Heart left ventricle (tissue), 16 donors: ENCODE measurements at regions of chr6 and their contacts with region 1.

Region 1: GRCh38 chr6:106556368-106556960 is 72.8 kb downstream of the RTN4IP1 start:
- DNase-seq: no peak
- ATAC-seq: no peak
- H3K4me3 ChIP-seq: no peak overlapping the region
- H3K27ac ChIP-seq: no peak overlapping the region
- H3K4me1 ChIP-seq: peaks cover 0 to 10% (median 0%) of the 10 kb centered on the region in 12 donors
- H3K27me3 ChIP-seq: no peaks in the 10 kb centered on the region
- CTCF ChIP-seq: peak in 10 of 12 donors; percentile 5 to 50 (median 34)
- POLR2A ChIP-seq: no peak

Region 2: GRCh38 chr6:105424175-105424783 is 1132.2 kb before region 1 on chr6:
- intact Hi-C with region 1: loop called in 1 of 10 experiments (anchors 10 kb)
- DNase-seq: peak in 1 of 5 donors; percentile 17
- ATAC-seq: peak in 3 of 4 donors; percentile 56 to 69 (median 56)
- H3K4me3 ChIP-seq: no peak overlapping the region
- H3K27ac ChIP-seq: no peak overlapping the region
- H3K4me1 ChIP-seq: peaks cover 0 to 9% (median 0%) of the 10 kb centered on the region in 12 donors
- H3K27me3 ChIP-seq: no peaks in the 10 kb centered on the region
- CTCF ChIP-seq: peak; percentile 50 to 75 (median 60)
- POLR2A ChIP-seq: no peak

Region 3: DNA sequence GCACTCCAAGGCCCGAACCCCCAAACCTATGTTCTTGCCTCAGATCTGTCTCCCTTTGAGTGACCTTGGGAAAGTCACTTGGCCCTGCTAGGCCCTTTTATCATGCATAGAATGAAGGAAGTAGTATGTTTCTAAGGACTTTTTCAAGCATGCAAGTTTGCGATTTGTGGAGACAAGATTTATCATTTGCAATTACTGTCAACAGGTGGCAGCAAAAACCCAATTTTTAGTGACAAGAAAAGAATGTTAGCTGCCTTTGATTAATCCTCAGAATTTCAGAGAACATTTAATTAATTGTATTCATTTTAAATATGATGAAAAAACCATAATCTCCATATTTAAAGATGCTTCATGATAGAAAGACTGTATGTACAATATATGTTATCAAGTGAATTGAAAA is 1125.2 kb before region 1 on chr6:
- intact Hi-C with region 1: loop called in 2 of 10 experiments (anchors 5 to 10 kb)
- DNase-seq: no peak
- ATAC-seq: no peak
- H3K4me3 ChIP-seq: no peak overlapping the region
- H3K27ac ChIP-seq: no peak overlapping the region
- H3K4me1 ChIP-seq: peaks cover 0 to 9% (median 0%) of the 10 kb centered on the region in 12 donors
- H3K27me3 ChIP-seq: peaks cover 0 to 6% (median 0%) of the 10 kb centered on the region in 9 donors
- CTCF ChIP-seq: peak; percentile 37 to 71 (median 56)
- POLR2A ChIP-seq: no peak

Region 4: DNA sequence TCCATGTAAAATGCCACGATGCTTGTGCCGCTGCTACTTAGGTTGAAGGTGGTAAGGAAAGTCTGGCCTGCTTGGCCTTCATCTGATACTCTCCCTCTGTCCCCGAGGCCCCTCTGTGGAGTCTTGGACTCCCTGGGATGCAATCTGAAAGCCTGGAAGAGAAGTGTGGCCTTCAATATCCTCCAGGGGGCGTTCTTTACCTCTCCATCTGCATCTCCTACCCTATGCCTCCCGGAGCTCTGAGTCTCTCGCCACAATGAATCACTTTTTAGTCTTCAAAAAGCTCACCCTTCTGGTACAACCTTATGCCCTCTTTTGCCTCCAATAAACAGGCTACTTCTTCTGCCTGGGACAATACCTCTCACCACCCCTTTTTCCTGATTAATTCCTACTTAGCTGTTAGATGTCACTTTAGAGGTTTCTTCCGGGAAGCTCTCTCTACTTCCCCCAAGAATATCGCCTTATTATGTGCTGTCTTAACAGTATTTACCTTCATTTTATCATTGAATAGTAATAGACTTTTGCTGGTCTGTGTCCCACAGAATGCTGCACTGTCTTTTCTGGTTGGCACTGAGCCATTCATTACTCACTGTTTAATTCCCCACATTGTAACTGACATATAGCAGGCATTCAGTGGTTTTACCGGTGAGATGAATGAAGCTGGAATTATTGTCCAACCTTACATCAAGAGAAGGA is 217.0 kb before region 1 on chr6:
- intact Hi-C with region 1: loop called in 1 of 10 experiments (anchors 10 kb)
- DNase-seq: peak in 3 of 5 donors; percentile 9 to 30 (median 24)
- ATAC-seq: peak in 3 of 4 donors; percentile 71 to 88 (median 82)
- H3K4me3 ChIP-seq: peak overlapping the region in 1 of 12 donors; percentile 7
- H3K27ac ChIP-seq: no peak overlapping the region
- H3K4me1 ChIP-seq: peaks cover 0 to 5% (median 0%) of the 10 kb centered on the region in 12 donors
- H3K27me3 ChIP-seq: peaks cover 0 to 5% (median 0%) of the 10 kb centered on the region in 9 donors
- CTCF ChIP-seq: peak; percentile 54 to 74 (median 65)
- POLR2A ChIP-seq: no peak

Region 5: GRCh38 chr6:106512048-106512967 is 44.2 kb before region 1 on chr6:
- intact Hi-C with region 1: loop called in 1 of 10 experiments (anchors 5 kb)
- DNase-seq: peak; percentile 63 to 89 (median 72)
- ATAC-seq: peak; percentile 44 to 87 (median 86)
- H3K4me3 ChIP-seq: peak overlapping the region; percentile 54 to 92 (median 76)
- H3K27ac ChIP-seq: peak overlapping the region; percentile 26 to 96 (median 76)
- H3K4me1 ChIP-seq: peaks cover 0 to 73% (median 25%) of the 10 kb centered on the region in 12 donors
- H3K27me3 ChIP-seq: peaks cover 0 to 51% (median 28%) of the 10 kb centered on the region in 9 donors
- CTCF ChIP-seq: peak in 6 of 12 donors; percentile 7 to 45 (median 30)
- POLR2A ChIP-seq: no peak

Region 6: GRCh38 chr6:106586815-106587415 is 30.5 kb after region 1 on chr6:
- intact Hi-C with region 1: no loop called
- DNase-seq: no peak
- ATAC-seq: no peak
- H3K4me3 ChIP-seq: no peak overlapping the region
- H3K27ac ChIP-seq: no peak overlapping the region
- H3K4me1 ChIP-seq: peaks cover 0 to 8% (median 0%) of the 10 kb centered on the region in 12 donors
- H3K27me3 ChIP-seq: no peaks in the 10 kb centered on the region
- CTCF ChIP-seq: no peak
- POLR2A ChIP-seq: no peak

Region 7: DNA sequence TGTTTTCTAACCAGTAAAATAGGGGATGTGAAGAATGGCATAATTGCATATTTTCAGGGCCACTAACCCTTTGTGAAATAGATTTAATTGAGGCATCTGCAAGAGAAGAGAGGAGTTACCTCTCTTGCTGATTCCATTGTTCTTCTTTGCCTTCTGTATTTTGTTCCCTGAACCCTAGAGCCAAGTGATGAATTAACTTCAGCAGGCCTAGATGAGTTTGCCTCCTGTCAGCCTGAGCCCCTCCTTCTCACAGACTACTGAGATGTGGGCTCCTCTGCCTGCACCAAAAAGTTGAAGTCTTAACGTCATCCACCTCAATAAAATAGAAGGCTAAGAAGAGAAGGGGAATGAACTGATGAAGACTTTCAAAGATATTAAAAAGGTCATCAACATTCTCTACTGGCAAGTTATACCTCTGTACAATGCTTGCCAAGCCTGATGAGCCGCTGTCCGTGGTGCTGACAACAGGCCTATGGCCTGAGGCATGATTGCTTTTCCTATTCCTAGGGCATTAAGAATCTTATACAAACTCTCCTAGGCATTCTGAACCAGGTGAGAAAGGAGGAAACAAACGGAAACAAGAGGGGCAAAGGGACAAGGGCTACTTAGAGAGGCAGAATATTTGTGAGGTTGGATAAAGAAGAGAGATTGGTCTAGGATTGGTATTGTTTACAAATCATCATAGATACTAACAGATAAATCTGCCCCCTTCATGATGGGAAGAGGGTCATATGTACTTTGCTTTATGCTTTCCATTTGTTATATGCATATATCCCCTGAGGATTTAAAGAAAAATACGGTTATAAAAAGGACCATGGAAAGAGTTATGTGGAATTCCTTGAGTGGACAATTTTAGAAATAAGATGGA is 371.3 kb after region 1 on chr6:
- intact Hi-C with region 1: no loop called
- DNase-seq: peak in 3 of 5 donors; percentile 9 to 35 (median 21)
- ATAC-seq: peak in 1 of 4 donors; percentile 46
- H3K4me3 ChIP-seq: no peak overlapping the region
- H3K27ac ChIP-seq: no peak overlapping the region
- H3K4me1 ChIP-seq: no peaks in the 10 kb centered on the region
- H3K27me3 ChIP-seq: peaks cover 0 to 24% (median 0%) of the 10 kb centered on the region in 9 donors
- CTCF ChIP-seq: no peak
- POLR2A ChIP-seq: no peak